Activated CD4-positive, alpha-beta T cell treated with anti-CD3 and anti-CD28 coated beads, Interleukin-2, amount 10 ng/mL, durations not matched to agents 7 days and 5 days (primary cell): ENCODE measurements at regions of chr1 and their contacts with region 1.

Region 1: DNA sequence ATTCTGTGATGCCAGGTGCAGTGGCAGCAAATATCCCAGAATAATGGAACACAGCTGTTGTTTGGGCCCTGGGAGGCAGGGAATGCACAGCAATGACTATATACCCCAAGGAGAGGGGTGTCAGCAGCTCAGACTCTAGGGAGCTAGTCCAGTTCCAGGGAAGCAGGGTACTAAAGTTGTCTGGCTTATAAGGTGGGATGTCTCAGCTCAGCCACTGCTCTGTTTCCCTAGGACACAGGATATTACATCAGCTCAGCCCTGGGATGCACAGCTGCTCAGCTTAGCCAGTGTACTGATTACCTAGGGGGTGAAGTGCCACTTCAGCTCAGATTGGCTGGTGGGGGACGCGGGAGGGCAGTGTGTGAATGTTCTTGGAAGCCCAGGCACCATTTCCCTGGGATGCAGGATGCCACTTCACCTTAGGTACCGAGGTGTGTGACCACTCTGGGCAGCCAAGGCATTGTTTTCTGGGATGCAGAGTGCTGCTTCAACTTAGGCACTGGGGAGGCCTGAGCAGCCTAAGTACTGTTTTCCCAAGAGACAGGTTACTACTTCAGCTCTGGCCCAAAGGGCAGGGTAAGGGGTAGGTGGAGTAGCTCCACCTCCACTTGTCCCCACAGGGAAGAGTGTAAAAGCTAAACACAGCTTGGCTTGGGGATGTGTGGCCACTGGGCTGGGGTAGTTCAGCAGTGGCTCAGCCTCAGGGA is 59.4 kb downstream of the DIPK1A start:
- DNase-seq: no peak
- H3K4me3 Mint-ChIP-seq: no peak overlapping the region
- H3K27ac Mint-ChIP-seq: no peak overlapping the region
- H3K4me1 Mint-ChIP-seq: peaks cover 32% of the 10 kb centered on the region
- H3K27me3 Mint-ChIP-seq: no peaks in the 10 kb centered on the region

Region 2: DNA sequence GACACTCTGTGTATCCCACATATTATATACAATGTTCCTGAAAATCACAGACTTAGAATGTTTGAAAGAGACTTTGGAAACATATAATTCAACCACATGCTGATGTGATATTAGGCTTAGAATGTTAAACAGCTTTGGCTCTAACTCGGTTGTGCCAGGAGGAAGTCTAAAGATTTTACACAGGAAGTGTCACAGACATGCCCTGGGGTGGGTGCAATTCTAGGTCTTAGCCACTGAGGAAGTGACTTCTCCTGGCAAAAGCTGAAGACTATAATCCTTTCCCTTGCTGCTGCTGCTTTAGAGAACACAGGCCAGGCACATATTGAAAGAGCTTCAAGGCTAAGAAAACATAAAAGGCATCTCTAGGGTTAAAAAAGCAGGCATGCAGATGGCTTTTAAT is 19.0 kb before region 1 on chr1:
- CTCF ChIA-PET with region 1: interaction called, 13 read pairs
- POLR2A ChIA-PET with region 1: no interaction called
- DNase-seq: peak; percentile 56
- H3K4me3 Mint-ChIP-seq: peak overlapping the region; percentile 1
- H3K27ac Mint-ChIP-seq: peak overlapping the region; percentile 80
- H3K4me1 Mint-ChIP-seq: peaks cover 35% of the 10 kb centered on the region
- H3K27me3 Mint-ChIP-seq: no peaks in the 10 kb centered on the region